ENCODE measurements at regions of chr9 and their contacts with region 1.

Region 1: GRCh38 chr9:22645893-22646292 is 199.3 kb downstream of the DMRTA1 start:
- DNase-seq: no peak
- ATAC-seq: no peak
- H3K4me3 ChIP-seq: no peak overlapping the region
- H3K27ac ChIP-seq: no peak overlapping the region
- H3K4me1 ChIP-seq: no peaks in the 10 kb centered on the region
- H3K27me3 ChIP-seq: no peaks in the 10 kb centered on the region
- CTCF ChIP-seq: no peak
- EP300 ChIP-seq: no peak
- POLR2A ChIP-seq: no peak
- RAD21 ChIP-seq: no peak

Region 2: DNA sequence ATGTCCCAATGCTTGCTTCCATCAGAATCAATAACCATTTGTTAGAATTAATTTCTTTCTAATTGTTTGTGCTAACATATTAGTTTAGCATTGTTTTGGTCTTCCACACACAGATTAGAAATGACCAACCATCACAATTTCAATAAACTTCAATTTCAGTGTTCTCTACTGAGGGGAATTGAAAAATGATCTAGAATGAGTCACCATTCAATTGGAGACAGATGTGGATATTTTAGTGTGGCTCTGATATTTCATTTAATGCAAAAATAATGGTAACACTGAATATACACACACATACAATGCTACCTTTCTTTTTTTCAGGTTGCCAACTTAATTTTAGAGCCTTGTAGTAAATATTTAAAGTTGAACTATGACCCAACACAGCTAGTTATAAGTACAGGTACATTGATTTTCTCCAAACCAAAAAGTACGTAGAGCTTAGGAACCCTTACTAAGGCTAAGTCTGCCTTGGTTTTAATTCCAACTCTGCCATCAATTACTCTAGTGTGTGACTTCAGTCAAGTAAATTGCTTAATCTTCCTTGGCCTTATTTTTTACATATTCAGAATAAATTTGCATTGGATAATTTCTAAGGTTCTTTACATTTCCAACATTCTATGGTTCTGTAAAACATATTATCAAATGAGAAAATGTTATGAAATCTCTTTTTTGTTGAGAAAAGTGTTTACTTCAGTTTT is 55.4 kb before region 1 on chr9:
- CTCF ChIA-PET with region 1: no interaction called
- POLR2A ChIA-PET with region 1: no interaction called
- RAD21 ChIA-PET with region 1: no interaction called
- SMC1A ChIA-PET with region 1: no interaction called
- in situ Hi-C with region 1: no loop called
- intact Hi-C with region 1: no loop called
- DNase-seq: no peak
- ATAC-seq: no peak
- H3K4me3 ChIP-seq: no peak overlapping the region
- H3K27ac ChIP-seq: no peak overlapping the region
- H3K4me1 ChIP-seq: no peaks in the 10 kb centered on the region
- H3K27me3 ChIP-seq: no peaks in the 10 kb centered on the region
- CTCF ChIP-seq: no peak
- EP300 ChIP-seq: no peak
- POLR2A ChIP-seq: no peak
- RAD21 ChIP-seq: no peak

Region 3: GRCh38 chr9:22693156-22693555 is 47.3 kb after region 1 on chr9:
- CTCF ChIA-PET with region 1: no interaction called
- POLR2A ChIA-PET with region 1: no interaction called
- RAD21 ChIA-PET with region 1: no interaction called
- SMC1A ChIA-PET with region 1: no interaction called
- in situ Hi-C with region 1: no loop called
- intact Hi-C with region 1: loop called (anchors 5 kb)
- DNase-seq: no peak
- ATAC-seq: no peak
- H3K4me3 ChIP-seq: no peak overlapping the region
- H3K27ac ChIP-seq: no peak overlapping the region
- H3K4me1 ChIP-seq: no peaks in the 10 kb centered on the region
- H3K27me3 ChIP-seq: no peaks in the 10 kb centered on the region
- CTCF ChIP-seq: no peak
- EP300 ChIP-seq: no peak
- POLR2A ChIP-seq: no peak
- RAD21 ChIP-seq: no peak

Measured in GM12878 (cell line).